ENCODE measurements at regions of chr7 and their contacts with region 1.

Region 1: GRCh38 chr7:5088906-5089305 is 43.2 kb downstream of the RBAK start:
- DNase-seq: no peak
- ATAC-seq: no peak
- H3K4me3 Mint-ChIP-seq: peak overlapping the region; percentile 6; the same call in 1 of the 2 replicates
- H3K27ac Mint-ChIP-seq: peak overlapping the region; percentile 23; the same call in 1 of the 2 replicates
- H3K4me1 Mint-ChIP-seq: peaks cover 6% of the 10 kb centered on the region; the same call in 1 of the 2 replicates
- H3K27me3 Mint-ChIP-seq: peaks cover 25% of the 10 kb centered on the region
- CTCF ChIP-seq: no peak

Region 2: DNA sequence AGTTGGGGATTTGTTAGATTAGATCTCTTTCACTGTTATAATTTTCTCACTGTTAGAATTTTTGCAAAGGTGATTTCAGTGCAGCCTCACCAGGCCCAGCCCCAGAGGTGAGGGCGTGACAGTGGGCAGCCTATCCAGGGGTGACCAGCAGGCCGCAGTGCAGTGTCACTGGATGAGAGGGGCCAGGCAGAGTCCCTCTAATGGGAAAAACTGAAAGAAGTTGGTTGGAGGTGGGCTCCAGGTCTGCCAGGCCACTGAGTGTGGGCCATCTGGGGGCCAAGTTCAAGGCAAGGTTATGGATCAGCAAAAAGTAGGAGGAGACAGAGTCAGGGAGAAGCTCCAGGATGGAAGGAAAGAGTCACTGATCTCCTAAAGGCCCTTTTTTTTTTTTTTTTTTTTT is 1878.4 kb before region 1 on chr7:
- CTCF ChIA-PET with region 1: no interaction called
- POLR2A ChIA-PET with region 1: interaction called, 11 read pairs
- DNase-seq: peak; percentile 47
- ATAC-seq: peak; percentile 92
- H3K4me3 Mint-ChIP-seq: no peak overlapping the region
- H3K27ac Mint-ChIP-seq: peak overlapping the region; percentile 74; the same call in 1 of the 2 replicates
- H3K4me1 Mint-ChIP-seq: no peaks in the 10 kb centered on the region
- H3K27me3 Mint-ChIP-seq: no peaks in the 10 kb centered on the region
- CTCF ChIP-seq: no peak

Region 3: GRCh38 chr7:4797858-4798705 is 290.8 kb before region 1 on chr7:
- CTCF ChIA-PET with region 1: interaction called, 27 read pairs
- POLR2A ChIA-PET with region 1: no interaction called
- DNase-seq: peak; percentile 83
- ATAC-seq: peak; percentile 92
- H3K4me3 Mint-ChIP-seq: no peak overlapping the region
- H3K27ac Mint-ChIP-seq: no peak overlapping the region
- H3K4me1 Mint-ChIP-seq: peaks cover 5% of the 10 kb centered on the region
- H3K27me3 Mint-ChIP-seq: no peaks in the 10 kb centered on the region
- CTCF ChIP-seq: peak; percentile 81